Caco-2 (cell line): ENCODE measurements at regions of chr7 and their contacts with region 1.

Region 1: GRCh38 chr7:98400542-98401340 is at the start of gene BAIAP2L1:
- DNase-seq: peak; percentile 96 to 99
- H3K4me3 ChIP-seq: peak within 1 kb of the TSS; percentile 90
- H3K4me3 Mint-ChIP-seq: peak within 1 kb of the TSS; percentile 75
- H3K27ac Mint-ChIP-seq: peak within 1 kb of the TSS; percentile 67
- H3K4me1 ChIP-seq: peaks cover 26% of the 10 kb centered on the region
- H3K4me1 Mint-ChIP-seq: peaks cover 17% of the 10 kb centered on the region
- H3K27me3 ChIP-seq: no peaks in the 10 kb centered on the region
- H3K27me3 Mint-ChIP-seq: no peaks in the 10 kb centered on the region
- CTCF ChIP-seq: no peak
- total RNA-seq, gene BAIAP2L1: 60.9 and 66.9 TPM in 2 replicates

Region 2: GRCh38 chr7:98294796-98295382 is 105.9 kb before region 1 on chr7:
- CTCF ChIA-PET with region 1: no interaction called
- POLR2A ChIA-PET with region 1: interaction called, 21 read pairs
- intact Hi-C with region 1: loop called (anchors 1 kb)
- DNase-seq: peak; percentile 82 to 88
- H3K4me3 ChIP-seq: no peak overlapping the region
- H3K4me3 Mint-ChIP-seq: no peak overlapping the region
- H3K27ac Mint-ChIP-seq: peak overlapping the region; percentile 85
- H3K4me1 ChIP-seq: peaks cover 9% of the 10 kb centered on the region
- H3K4me1 Mint-ChIP-seq: peaks cover 16% of the 10 kb centered on the region
- H3K27me3 ChIP-seq: no peaks in the 10 kb centered on the region
- H3K27me3 Mint-ChIP-seq: no peaks in the 10 kb centered on the region
- CTCF ChIP-seq: peak; percentile 84 to 89

Region 3: DNA sequence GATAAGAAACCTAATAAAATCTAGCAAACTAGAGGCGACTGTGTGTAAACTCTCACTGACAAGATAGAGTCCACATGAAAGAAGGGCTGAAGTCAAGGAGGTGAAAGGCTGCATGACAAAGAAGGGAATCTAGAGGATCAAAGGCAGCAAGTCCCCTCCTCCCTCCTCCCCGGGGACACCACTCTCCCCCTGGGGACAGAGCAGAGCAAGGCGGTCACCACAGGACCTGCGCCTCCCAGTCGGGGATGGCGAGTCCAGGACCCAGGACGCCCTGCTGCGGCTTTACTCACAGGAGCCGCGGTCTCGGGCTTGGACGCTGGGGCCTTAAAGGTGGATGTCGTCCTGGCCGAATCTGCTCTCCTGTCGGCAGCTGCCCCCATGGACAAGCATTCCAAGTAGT is 96.8 kb before region 1 on chr7:
- CTCF ChIA-PET with region 1: interaction called, 11 read pairs
- POLR2A ChIA-PET with region 1: interaction called, 21 read pairs
- intact Hi-C with region 1: no loop called
- DNase-seq: peak; percentile 89 to 94
- H3K4me3 ChIP-seq: 0 out of 2 replicates have a peak overlapping the region, but pooled peaks have one; percentile 11
- H3K4me3 Mint-ChIP-seq: peak overlapping the region; percentile 57
- H3K27ac Mint-ChIP-seq: peak overlapping the region; percentile 73
- H3K4me1 ChIP-seq: peaks cover 74% of the 10 kb centered on the region
- H3K4me1 Mint-ChIP-seq: peaks cover 66% of the 10 kb centered on the region
- H3K27me3 ChIP-seq: no peaks in the 10 kb centered on the region
- H3K27me3 Mint-ChIP-seq: no peaks in the 10 kb centered on the region
- CTCF ChIP-seq: peak in 1 of 2 experiments; percentile 27

Region 4: GRCh38 chr7:98323597-98324322 is 77.0 kb before region 1 on chr7:
- CTCF ChIA-PET with region 1: interaction called, 13 read pairs
- POLR2A ChIA-PET with region 1: interaction called, 7 read pairs
- intact Hi-C with region 1: no loop called
- DNase-seq: no peak
- H3K4me3 ChIP-seq: no peak overlapping the region
- H3K4me3 Mint-ChIP-seq: no peak overlapping the region
- H3K27ac Mint-ChIP-seq: peak overlapping the region; percentile 85
- H3K4me1 ChIP-seq: peaks cover 31% of the 10 kb centered on the region
- H3K4me1 Mint-ChIP-seq: peaks cover 41% of the 10 kb centered on the region
- H3K27me3 ChIP-seq: no peaks in the 10 kb centered on the region
- H3K27me3 Mint-ChIP-seq: no peaks in the 10 kb centered on the region
- CTCF ChIP-seq: no peak

Region 5: DNA sequence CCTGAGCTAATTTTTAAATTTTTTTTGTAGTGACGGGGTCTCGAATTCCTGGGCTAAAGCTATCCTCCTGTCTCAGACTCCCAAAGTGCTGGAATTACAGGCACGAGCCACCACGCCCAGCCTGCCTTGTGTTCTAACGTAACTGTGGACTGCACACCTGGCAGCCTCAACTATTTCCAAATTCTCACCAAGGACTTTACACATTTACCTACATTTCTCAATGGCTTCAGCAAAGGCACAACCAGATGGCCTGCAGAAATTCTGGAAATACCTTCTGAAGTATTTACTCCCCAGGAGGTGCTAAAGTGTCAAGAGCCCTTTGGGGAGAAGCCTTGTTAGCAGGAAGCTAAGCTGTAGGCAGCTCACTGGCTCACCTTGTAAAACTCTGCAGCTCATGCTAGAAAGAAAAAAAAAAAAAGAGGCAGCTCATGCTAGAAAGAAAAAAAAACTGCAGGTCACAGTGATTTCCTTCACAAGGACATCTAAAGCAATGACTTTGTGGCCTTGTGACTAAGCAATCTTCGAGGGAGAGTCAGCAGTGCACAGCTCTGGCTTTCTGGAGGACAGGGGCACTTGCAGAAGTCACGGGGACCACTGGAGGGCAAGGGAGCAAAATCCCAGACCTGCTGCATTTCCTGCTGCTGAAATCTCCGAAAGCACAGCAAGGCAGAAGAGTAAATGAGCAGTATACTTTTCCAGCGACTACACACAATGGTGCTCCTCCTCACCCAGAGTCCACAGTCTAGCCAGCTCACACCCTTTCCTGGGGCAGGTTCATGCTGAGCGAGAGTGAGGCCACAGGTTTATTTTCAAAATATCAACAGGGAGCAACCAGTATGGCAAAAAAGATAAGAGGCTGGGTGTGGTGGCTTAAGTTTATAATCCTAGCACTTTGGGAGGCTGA is 40.3 kb before region 1 on chr7:
- CTCF ChIA-PET with region 1: interaction called, 14 read pairs
- POLR2A ChIA-PET with region 1: interaction called, 7 read pairs
- intact Hi-C with region 1: loop called (anchors 2 kb)
- DNase-seq: peak; percentile 70 to 82
- H3K4me3 ChIP-seq: no peak overlapping the region
- H3K4me3 Mint-ChIP-seq: peak overlapping the region; percentile 32
- H3K27ac Mint-ChIP-seq: peak overlapping the region; percentile 91
- H3K4me1 ChIP-seq: peaks cover 35% of the 10 kb centered on the region
- H3K4me1 Mint-ChIP-seq: peaks cover 21% of the 10 kb centered on the region
- H3K27me3 ChIP-seq: no peaks in the 10 kb centered on the region
- H3K27me3 Mint-ChIP-seq: no peaks in the 10 kb centered on the region
- CTCF ChIP-seq: peak in 1 of 2 experiments; percentile 44

Region 6: DNA sequence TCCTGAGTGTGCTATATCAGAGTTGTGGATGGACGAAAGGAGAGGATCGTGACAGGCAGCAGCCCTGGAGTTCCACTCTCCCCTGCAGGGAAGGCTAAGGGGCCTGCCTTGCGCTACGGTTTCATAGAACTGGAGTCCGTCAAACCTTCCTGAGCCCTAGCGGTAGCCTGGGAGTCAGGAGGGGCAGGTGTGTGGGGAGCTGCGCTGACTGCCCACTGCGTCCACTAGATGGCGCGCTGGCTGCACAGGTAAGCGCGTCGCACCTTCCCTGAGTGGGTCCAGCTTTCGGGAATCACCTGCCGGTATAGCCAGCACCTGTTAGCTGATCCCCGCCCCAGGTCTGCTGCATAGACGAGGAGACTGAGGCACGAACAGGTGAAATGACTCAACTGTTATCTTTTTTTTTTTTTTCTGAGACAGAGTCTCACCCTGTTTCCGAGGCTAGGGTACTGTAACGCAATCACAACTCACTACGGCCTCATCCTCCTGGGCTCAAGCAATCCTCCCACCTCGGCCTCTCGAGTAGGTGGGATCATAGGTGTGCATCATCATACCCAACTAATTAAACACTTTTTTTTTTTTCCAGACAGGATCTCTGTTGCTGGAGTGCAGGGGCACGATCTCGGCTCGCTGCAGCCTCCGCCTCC is 20.3 kb after region 1 on chr7:
- CTCF ChIA-PET with region 1: interaction called, 22 read pairs
- POLR2A ChIA-PET with region 1: interaction called, 7 read pairs
- intact Hi-C with region 1: no loop called
- DNase-seq: peak; percentile 85 to 86
- H3K4me3 ChIP-seq: no peak overlapping the region
- H3K4me3 Mint-ChIP-seq: no peak overlapping the region
- H3K27ac Mint-ChIP-seq: no peak overlapping the region
- H3K4me1 ChIP-seq: peaks cover 38% of the 10 kb centered on the region
- H3K4me1 Mint-ChIP-seq: peaks cover 23% of the 10 kb centered on the region
- H3K27me3 ChIP-seq: no peaks in the 10 kb centered on the region
- H3K27me3 Mint-ChIP-seq: no peaks in the 10 kb centered on the region
- CTCF ChIP-seq: peak; percentile 89 to 92